ENCODE measurements at regions of chr2 and their contacts with region 1.

Region 1: DNA sequence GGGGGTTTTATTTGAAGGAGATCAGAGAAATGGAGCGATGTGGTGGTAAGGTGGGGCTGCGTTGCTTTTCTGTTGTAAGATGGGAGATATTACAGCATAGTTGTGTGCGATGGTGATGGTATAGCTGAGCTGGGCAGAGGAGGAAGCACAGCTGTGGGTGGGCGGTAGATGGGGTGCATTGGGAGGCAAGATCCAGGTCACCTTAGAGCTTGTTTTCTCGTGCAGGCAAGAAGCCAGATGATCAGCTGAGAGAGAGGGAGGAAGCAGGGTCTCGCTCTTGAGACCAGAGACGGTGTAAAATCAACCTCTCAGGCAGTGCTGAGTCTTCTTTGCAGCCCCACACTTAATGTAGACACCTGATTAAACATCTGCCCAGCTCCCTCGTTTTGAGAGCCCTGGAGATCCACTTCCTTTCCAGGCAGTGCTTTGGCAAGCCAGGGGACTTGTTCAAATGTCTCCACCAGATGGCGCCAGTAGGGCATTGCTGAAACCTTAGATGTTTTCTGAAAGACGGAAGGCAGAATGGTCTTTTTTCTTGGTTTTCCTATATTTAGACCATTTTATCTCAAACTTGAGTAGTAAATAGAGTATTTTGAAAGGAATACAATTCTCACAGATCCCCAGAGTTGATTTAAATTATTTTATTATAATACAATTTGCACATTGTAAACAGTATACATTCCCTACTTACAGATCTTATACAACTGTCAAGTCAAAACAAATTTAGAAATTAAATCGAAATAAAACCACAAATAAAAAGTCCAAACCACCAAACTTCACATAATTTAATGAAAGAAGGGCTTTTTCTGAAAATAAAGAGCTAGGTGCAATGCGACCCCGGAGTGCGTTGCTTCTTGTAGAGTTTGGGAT is 21.1 kb upstream of the LYPD6B start:
- DNase-seq: no peak
- H3K4me3 ChIP-seq: no peak overlapping the region
- H3K27ac ChIP-seq: no peak overlapping the region
- H3K4me1 ChIP-seq: no peaks in the 10 kb centered on the region
- H3K27me3 ChIP-seq: no peaks in the 10 kb centered on the region
- CTCF ChIP-seq: peak; percentile 43 to 88 (median 72)
- POLR2A ChIP-seq: no peak

Region 2: GRCh38 chr2:148696985-148697384 is 320.4 kb before region 1 on chr2:
- intact Hi-C with region 1: no loop called
- DNase-seq: no peak
- H3K4me3 ChIP-seq: no peak overlapping the region
- H3K27ac ChIP-seq: no peak overlapping the region
- H3K4me1 ChIP-seq: no peaks in the 10 kb centered on the region
- H3K27me3 ChIP-seq: no peaks in the 10 kb centered on the region
- CTCF ChIP-seq: no peak
- POLR2A ChIP-seq: no peak

Region 3: GRCh38 chr2:149561309-149561926 is 544.1 kb after region 1 on chr2:
- intact Hi-C with region 1: loop called (anchors 5 kb)
- DNase-seq: no peak
- H3K4me3 ChIP-seq: no peak overlapping the region
- H3K27ac ChIP-seq: no peak overlapping the region
- H3K4me1 ChIP-seq: no peaks in the 10 kb centered on the region
- H3K27me3 ChIP-seq: no peaks in the 10 kb centered on the region
- CTCF ChIP-seq: peak; percentile 73 to 76 (median 75)
- POLR2A ChIP-seq: no peak